ENCODE measurements at regions of chr10 and their contacts with region 1.

Region 1: DNA sequence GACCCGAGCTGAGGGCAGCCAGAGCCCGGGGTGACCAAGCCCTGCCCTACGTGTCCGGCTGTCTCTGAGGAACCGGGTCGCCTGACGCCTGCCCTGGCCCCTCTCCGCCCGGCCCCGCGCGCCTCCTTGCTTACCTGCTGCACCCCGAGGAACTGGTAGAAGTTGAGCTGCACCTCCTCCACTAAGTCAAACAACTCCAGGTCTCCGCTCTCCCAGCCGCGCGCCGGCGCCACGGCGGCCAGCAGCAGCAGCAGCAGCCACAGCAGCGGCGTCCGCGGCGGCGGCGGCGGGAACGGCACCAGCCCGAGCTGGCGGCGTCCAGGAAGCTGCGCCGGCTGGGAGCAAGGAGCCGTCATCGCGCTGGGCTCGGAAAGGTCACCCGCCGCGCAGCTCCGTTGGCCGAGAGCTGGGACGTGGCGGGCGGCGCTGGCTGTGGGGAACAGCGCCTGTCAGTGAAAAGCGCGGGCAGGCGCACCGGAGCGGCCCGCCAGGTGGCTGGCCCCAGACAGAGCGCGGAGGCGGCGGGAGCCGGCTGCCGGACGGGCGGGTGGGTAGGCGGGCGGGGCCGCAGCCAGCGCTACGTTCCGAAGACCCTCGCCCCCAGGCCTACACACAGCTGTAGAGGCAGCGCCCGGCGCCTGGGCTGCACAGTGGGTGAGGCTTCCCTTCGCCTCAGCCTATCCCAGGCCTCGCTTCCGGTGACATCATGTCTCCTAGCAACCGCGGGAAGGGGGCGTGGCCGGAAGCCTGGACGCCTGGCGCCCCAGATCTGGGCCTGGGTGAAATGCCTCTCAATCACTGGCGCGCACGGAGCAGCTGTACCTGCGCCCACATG is at the start of gene DNAJC1:
- DNase-seq: peak; percentile 99
- H3K4me3 Mint-ChIP-seq: peak within 1 kb of the TSS; percentile 87
- H3K27ac Mint-ChIP-seq: peak within 1 kb of the TSS; percentile 81
- H3K4me1 Mint-ChIP-seq: peaks cover 37% of the 10 kb centered on the region
- H3K27me3 Mint-ChIP-seq: peaks cover 6% of the 10 kb centered on the region
- total RNA-seq, gene DNAJC1: 24.0 to 24.8 TPM

Region 2: GRCh38 chr10:21525367-21526183 is 477.7 kb before region 1 on chr10 and contains the start of gene SKIDA1:
- CTCF ChIA-PET with region 1: interaction called, 3 read pairs
- POLR2A ChIA-PET with region 1: no interaction called
- intact Hi-C with region 1: loop called (anchors 2 kb)
- DNase-seq: peak; percentile 79
- H3K4me3 Mint-ChIP-seq: peak within 1 kb of the TSS; percentile 80
- H3K27ac Mint-ChIP-seq: peak within 1 kb of the TSS; percentile 90
- H3K4me1 Mint-ChIP-seq: peaks cover 30% of the 10 kb centered on the region
- H3K27me3 Mint-ChIP-seq: peaks cover 13% of the 10 kb centered on the region
- total RNA-seq, gene SKIDA1: 0.07 to 0.21 TPM

Region 3: GRCh38 chr10:22022257-22023032 is 19.1 kb after region 1 on chr10:
- CTCF ChIA-PET with region 1: no interaction called
- POLR2A ChIA-PET with region 1: interaction called, 3 read pairs
- intact Hi-C with region 1: loop called (anchors 1 kb)
- DNase-seq: peak; percentile 78
- H3K4me3 Mint-ChIP-seq: peak overlapping the region; percentile 57
- H3K27ac Mint-ChIP-seq: peak overlapping the region; percentile 80
- H3K4me1 Mint-ChIP-seq: peaks cover 21% of the 10 kb centered on the region
- H3K27me3 Mint-ChIP-seq: no peaks in the 10 kb centered on the region

Region 4: GRCh38 chr10:22244001-22244400 is 240.7 kb after region 1 on chr10:
- CTCF ChIA-PET with region 1: no interaction called
- POLR2A ChIA-PET with region 1: no interaction called
- intact Hi-C with region 1: loop called (anchors 1 kb)
- DNase-seq: peak; percentile 17
- H3K4me3 Mint-ChIP-seq: no peak overlapping the region
- H3K27ac Mint-ChIP-seq: no peak overlapping the region
- H3K4me1 Mint-ChIP-seq: peaks cover 39% of the 10 kb centered on the region
- H3K27me3 Mint-ChIP-seq: peaks cover 4% of the 10 kb centered on the region

Region 5: GRCh38 chr10:22340362-22341189 is 337.3 kb after region 1 on chr10:
- CTCF ChIA-PET with region 1: no interaction called
- POLR2A ChIA-PET with region 1: interaction called, 5 read pairs
- intact Hi-C with region 1: loop called (anchors 2 kb)
- DNase-seq: peak; percentile 70
- H3K4me3 Mint-ChIP-seq: peak overlapping the region; percentile 83
- H3K27ac Mint-ChIP-seq: peak overlapping the region; percentile 87
- H3K4me1 Mint-ChIP-seq: peaks cover 25% of the 10 kb centered on the region
- H3K27me3 Mint-ChIP-seq: peaks cover 60% of the 10 kb centered on the region

Region 6: DNA sequence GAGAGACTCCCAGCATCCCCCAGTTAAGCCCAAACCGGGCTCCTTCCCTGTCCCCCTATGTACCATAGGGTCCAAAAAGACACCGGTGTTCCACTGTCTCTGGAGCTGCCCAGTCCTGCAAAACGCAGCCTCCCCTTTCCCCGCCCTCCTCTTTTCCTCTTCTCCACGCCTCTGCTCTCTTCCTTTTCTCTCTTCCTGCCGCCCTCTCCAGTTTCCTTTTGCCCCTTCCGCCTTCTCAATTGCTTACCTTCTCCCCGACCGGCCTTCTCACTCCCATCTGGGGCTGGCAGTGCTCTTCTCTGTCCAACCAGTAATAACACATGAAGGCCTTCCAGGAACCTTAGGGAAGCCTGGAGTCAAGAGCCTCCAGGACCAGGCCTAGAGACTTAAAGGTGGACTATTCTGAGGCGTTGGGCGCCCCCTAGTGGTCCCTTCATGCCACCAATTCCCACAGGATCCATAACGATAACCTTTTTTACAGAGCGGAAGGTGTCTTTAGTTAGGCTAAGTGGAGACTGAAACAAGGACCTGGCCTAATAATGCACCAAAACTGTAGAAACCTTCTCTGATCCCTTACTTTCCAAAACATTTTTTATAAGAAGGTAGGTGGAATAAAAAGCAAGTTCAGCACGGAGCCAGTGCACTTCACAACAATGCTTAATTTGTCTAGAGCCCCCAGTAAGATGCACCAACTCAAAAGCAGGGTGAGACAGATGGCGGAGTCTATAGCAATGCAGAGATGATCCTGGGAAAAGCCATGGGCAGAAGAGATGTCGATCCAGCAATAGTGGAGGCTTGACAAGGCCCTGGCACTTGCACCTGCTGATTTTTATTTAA is 1064.9 kb after region 1 on chr10:
- CTCF ChIA-PET with region 1: no interaction called
- POLR2A ChIA-PET with region 1: no interaction called
- intact Hi-C with region 1: loop called (anchors 5 kb)
- DNase-seq: peak; percentile 76
- H3K4me3 Mint-ChIP-seq: no peak overlapping the region
- H3K27ac Mint-ChIP-seq: no peak overlapping the region
- H3K4me1 Mint-ChIP-seq: no peaks in the 10 kb centered on the region
- H3K27me3 Mint-ChIP-seq: peaks cover 1% of the 10 kb centered on the region